Heart left ventricle (tissue), 16 donors: ENCODE measurements at regions of chr6 and their contacts with region 1.

Region 1: DNA sequence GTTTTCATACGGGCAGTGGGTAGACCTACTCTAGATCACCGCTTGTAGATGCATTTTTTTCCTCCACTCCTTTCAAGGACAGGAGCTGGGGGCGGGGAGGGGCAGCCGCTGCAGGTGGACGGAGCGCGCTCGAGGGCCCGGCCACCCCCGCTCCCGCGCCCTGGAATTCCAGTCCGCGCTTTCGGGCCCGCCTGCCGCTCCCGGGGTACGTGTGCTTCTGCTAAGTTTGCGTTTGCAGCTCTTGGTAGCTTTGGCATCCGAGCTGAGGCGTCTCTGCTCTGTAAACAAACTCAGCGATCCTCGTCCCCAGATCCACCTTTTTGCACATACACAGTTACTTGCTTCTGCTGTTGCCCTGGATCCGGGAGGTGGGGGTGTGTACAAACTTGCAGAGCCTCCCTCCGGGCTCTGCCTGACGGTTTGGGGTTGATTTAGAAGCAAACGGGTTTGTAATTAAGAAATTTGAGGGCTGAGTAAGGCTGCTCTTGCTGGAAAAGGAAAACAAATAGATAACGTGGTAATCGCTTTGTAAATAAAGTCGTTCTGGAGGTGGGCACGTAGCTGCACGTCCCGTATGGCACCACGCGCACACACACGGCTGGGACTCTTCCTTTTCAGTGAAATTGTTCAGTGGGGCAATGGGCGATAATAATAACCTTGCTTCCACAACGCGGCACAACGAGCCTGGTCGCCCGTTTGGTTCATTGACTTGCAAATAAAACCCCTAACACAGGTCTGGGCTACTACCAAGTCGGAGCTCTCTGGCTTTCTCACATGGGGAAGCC is 976 bp upstream of the CITED2 start:
- DNase-seq: peak; percentile 90 to 95 (median 91)
- ATAC-seq: peak; percentile 70 to 82 (median 80)
- H3K4me3 ChIP-seq: peak overlapping the region; percentile 78 to 98 (median 92)
- H3K27ac ChIP-seq: peak overlapping the region; percentile 95 to 100 (median 98)
- H3K4me1 ChIP-seq: peaks cover 0 to 30% (median 15%) of the 10 kb centered on the region in 12 donors
- H3K27me3 ChIP-seq: no peaks in the 10 kb centered on the region
- CTCF ChIP-seq: peak in 1 of 12 donors; percentile 14
- POLR2A ChIP-seq: peak in 1 of 2 donors; percentile 64

Region 2: DNA sequence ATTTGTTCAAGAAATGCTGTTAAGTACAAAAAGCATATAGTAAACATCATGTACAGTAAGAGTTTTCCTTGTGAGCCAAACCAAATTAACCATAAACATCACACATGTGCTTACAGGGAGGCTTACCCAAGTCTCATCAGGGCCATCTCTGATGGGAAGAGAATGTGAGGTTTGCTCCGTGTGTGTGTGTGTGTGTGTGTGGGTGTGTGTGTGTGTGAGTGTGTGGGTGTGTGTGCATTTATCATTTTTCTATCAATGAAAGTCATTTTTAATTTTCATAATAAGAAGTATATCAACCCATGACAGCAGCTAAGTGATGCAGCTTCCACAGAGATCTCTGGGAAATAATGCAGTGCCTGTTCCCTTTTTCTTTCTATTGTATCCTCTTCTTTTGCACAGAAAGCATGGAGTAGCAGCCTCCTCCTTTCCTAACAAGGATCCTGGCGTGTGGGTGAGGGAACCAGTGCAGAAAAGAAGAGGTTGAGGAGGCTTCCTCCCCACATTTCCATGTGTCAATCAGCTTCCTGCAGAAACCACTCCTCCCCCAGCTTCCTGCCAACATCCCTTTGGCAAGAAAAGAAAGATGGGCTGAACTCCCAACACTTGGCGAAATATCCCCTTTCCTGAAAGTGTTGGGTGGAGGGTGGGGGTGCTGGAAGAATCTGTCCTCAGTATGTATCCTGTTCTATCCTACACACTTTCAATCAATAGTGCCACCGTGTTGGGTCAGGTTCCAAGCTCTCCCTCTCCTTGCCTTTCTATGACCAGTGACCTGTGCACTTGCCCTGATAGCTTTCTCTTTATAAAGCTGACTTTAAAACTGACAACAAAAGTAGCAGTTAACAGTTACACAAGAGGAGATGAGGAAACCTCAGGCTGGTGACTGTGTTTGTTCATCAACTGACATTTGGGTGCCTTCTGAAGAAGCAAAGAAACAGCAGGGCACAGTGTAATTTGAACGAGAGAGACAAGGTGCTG is 250.9 kb after region 1 on chr6:
- intact Hi-C with region 1: no loop called
- DNase-seq: no peak
- ATAC-seq: peak in 1 of 4 donors; percentile 49
- H3K4me3 ChIP-seq: no peak overlapping the region
- H3K27ac ChIP-seq: no peak overlapping the region
- H3K4me1 ChIP-seq: peaks cover 0 to 26% (median 0%) of the 10 kb centered on the region in 12 donors
- H3K27me3 ChIP-seq: no peaks in the 10 kb centered on the region
- CTCF ChIP-seq: no peak
- POLR2A ChIP-seq: no peak

Region 3: DNA sequence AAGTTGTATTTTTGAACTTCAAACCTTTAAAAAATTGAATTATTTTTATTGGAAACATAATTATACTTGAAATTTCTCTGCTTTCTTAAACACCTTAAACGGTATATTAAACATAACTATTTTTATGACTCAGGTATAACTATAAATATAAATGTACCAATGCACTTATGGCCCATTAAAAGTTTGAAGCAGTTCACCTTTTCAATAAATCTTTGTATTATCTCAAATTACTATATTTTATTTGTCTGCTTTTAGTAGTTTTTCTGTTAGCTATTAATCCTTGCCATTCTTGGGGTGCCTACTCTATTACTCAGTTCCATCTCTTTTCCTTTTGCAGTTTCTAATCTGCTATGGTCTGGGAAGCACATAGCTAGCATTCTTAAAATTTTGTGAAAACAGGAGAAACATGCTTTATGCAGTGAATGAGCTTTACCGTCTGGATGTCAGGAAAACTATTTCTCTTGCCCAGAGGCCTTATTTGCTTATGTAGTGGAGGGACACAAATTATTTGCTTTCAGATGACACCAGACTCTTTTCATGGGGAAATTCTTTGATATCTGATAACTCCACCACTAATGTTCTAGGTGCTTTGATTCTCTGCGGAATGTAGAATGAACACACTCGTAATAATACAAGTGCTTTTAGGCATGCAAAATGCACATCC is 377.9 kb after region 1 on chr6:
- intact Hi-C with region 1: loop called in 2 of 10 experiments (anchors 2 to 10 kb)
- DNase-seq: no peak
- ATAC-seq: no peak
- H3K4me3 ChIP-seq: no peak overlapping the region
- H3K27ac ChIP-seq: no peak overlapping the region
- H3K4me1 ChIP-seq: peaks cover 0 to 24% (median 16%) of the 10 kb centered on the region in 12 donors
- H3K27me3 ChIP-seq: no peaks in the 10 kb centered on the region
- CTCF ChIP-seq: no peak
- POLR2A ChIP-seq: no peak

Region 4: GRCh38 chr6:139888681-139889122 is 513.3 kb after region 1 on chr6:
- intact Hi-C with region 1: loop called in 8 of 10 experiments (anchors 5 to 10 kb)
- DNase-seq: no peak
- ATAC-seq: no peak
- H3K4me3 ChIP-seq: no peak overlapping the region
- H3K27ac ChIP-seq: no peak overlapping the region
- H3K4me1 ChIP-seq: peaks cover 0 to 15% (median 4%) of the 10 kb centered on the region in 12 donors
- H3K27me3 ChIP-seq: no peaks in the 10 kb centered on the region
- CTCF ChIP-seq: no peak
- POLR2A ChIP-seq: no peak

Region 5: DNA sequence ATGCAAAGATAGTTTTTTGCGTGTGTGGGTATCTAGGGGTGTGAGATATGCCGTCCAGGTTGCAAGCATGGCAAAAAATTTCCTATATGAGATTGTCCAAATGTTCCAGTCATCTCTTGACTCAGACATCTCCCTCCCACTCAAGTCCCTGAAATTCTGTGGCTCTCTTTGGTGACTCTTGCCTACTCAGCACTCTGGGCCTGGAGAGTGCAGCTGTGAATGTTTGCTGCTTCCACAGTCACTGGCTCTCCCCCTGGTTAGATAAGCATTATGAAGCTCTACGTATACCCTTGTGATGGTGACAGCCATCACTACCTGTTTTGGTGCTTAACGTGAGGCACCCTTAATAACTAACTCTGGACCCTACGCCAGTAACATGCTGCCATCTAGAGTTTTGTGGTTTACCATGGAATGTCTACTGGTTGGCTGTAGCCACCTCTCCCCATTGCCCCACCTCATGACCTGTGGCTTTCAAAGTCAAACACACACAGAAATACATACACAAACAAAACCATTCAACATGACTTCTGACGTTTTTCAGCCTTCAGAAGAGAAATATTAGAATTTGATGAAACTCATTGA is 620.9 kb after region 1 on chr6:
- intact Hi-C with region 1: loop called in 2 of 10 experiments (anchors 10 kb)
- DNase-seq: peak in 1 of 5 donors; percentile 18
- ATAC-seq: peak in 3 of 4 donors; percentile 37 to 53 (median 41)
- H3K4me3 ChIP-seq: no peak overlapping the region
- H3K27ac ChIP-seq: no peak overlapping the region
- H3K4me1 ChIP-seq: peaks cover 0 to 10% (median under 1%) of the 10 kb centered on the region in 12 donors
- H3K27me3 ChIP-seq: no peaks in the 10 kb centered on the region
- CTCF ChIP-seq: peak in 1 of 12 donors; percentile 8
- POLR2A ChIP-seq: no peak

Region 6: GRCh38 chr6:140441256-140441655 is 1065.8 kb after region 1 on chr6:
- intact Hi-C with region 1: loop called in 6 of 10 experiments (anchors 2 to 5 kb)
- DNase-seq: peak; percentile 60 to 77 (median 73)
- ATAC-seq: peak; percentile 71 to 98 (median 96)
- H3K4me3 ChIP-seq: no peak overlapping the region
- H3K27ac ChIP-seq: peak overlapping the region in 10 of 12 donors; percentile 14 to 70 (median 36)
- H3K4me1 ChIP-seq: peaks cover 0 to 36% (median 15%) of the 10 kb centered on the region in 12 donors
- H3K27me3 ChIP-seq: no peaks in the 10 kb centered on the region
- CTCF ChIP-seq: peak; percentile 39 to 77 (median 66)
- POLR2A ChIP-seq: no peak